ENCODE measurements at regions of chr20 and their contacts with region 1.

Region 1: GRCh38 chr20:33666293-33667244 is at the start of gene ACTL10:
- DNase-seq: peak; percentile 98
- ATAC-seq: peak; percentile 82
- H3K4me3 Mint-ChIP-seq: peak within 1 kb of the TSS; percentile 80
- H3K27ac Mint-ChIP-seq: peak within 1 kb of the TSS; percentile 91
- H3K4me1 Mint-ChIP-seq: peaks cover 28% of the 10 kb centered on the region
- H3K27me3 Mint-ChIP-seq: peaks cover 16% of the 10 kb centered on the region
- CTCF ChIP-seq: no peak
- total RNA-seq, gene ACTL10: 1.3 to 1.9 TPM (median 1.5 TPM) in 3 replicates

Region 2: GRCh38 chr20:33401184-33401920 is 265.2 kb before region 1 on chr20 and contains the start of gene CDK5RAP1:
- CTCF ChIA-PET with region 1: interaction called, 18 read pairs
- POLR2A ChIA-PET with region 1: interaction called, 5 read pairs
- DNase-seq: peak; percentile 83
- ATAC-seq: peak; percentile 87
- H3K4me3 Mint-ChIP-seq: peak within 1 kb of the TSS; percentile 93
- H3K27ac Mint-ChIP-seq: peak within 1 kb of the TSS; percentile 93
- H3K4me1 Mint-ChIP-seq: peaks cover 11% of the 10 kb centered on the region
- H3K27me3 Mint-ChIP-seq: no peaks in the 10 kb centered on the region
- CTCF ChIP-seq: no peak
- total RNA-seq, gene CDK5RAP1: 47.6 to 56.3 TPM (median 52.8 TPM) in 3 replicates

Region 3: DNA sequence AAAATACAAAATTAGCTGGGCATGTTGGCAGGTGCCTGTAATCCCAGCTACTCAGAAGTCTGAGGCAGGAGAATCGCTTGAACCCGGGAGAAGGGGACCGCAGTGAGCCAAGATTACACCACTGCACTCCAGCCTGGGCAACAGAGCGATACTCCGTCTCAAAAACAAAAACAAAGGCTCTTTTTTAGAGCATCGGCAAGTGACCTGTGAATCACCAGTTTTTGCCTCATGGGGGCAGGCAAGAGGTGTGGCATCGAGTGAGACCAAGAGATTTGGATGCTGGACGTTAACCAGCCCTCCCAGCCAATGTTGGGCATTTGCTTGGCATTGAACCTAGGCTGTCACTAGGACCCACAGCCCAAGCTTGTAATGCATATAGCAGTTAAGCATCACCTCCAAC is 250.6 kb before region 1 on chr20:
- CTCF ChIA-PET with region 1: no interaction called
- POLR2A ChIA-PET with region 1: no interaction called
- DNase-seq: peak; percentile 52
- ATAC-seq: peak; percentile 81
- H3K4me3 Mint-ChIP-seq: no peak overlapping the region
- H3K27ac Mint-ChIP-seq: no peak overlapping the region
- H3K4me1 Mint-ChIP-seq: 0 out of 2 replicates have a peak, but pooled peaks cover 2% of the 10 kb centered on the region
- H3K27me3 Mint-ChIP-seq: no peaks in the 10 kb centered on the region
- CTCF ChIP-seq: peak; percentile 42; the same call in 1 of the 2 replicates

Region 4: GRCh38 chr20:33460711-33461110 is 205.9 kb before region 1 on chr20:
- CTCF ChIA-PET with region 1: interaction called, 25 read pairs
- POLR2A ChIA-PET with region 1: interaction called, 3 read pairs
- DNase-seq: no peak
- ATAC-seq: peak; percentile 38
- H3K4me3 Mint-ChIP-seq: no peak overlapping the region
- H3K27ac Mint-ChIP-seq: no peak overlapping the region
- H3K4me1 Mint-ChIP-seq: peaks cover 15% of the 10 kb centered on the region
- H3K27me3 Mint-ChIP-seq: peaks cover 38% of the 10 kb centered on the region
- CTCF ChIP-seq: no peak

Region 5: GRCh38 chr20:33531047-33531877 is 135.3 kb before region 1 on chr20:
- CTCF ChIA-PET with region 1: no interaction called
- POLR2A ChIA-PET with region 1: no interaction called
- DNase-seq: no peak
- ATAC-seq: no peak
- H3K4me3 Mint-ChIP-seq: no peak overlapping the region
- H3K27ac Mint-ChIP-seq: peak overlapping the region; percentile 31
- H3K4me1 Mint-ChIP-seq: peaks cover 3% of the 10 kb centered on the region; the same call in 1 of the 2 replicates
- H3K27me3 Mint-ChIP-seq: no peaks in the 10 kb centered on the region
- CTCF ChIP-seq: no peak

Region 6: GRCh38 chr20:33653218-33653899 is 13.2 kb before region 1 on chr20:
- CTCF ChIA-PET with region 1: interaction called, 134 read pairs
- POLR2A ChIA-PET with region 1: interaction called, 24 read pairs
- DNase-seq: peak; percentile 82
- ATAC-seq: peak; percentile 85
- H3K4me3 Mint-ChIP-seq: no peak overlapping the region
- H3K27ac Mint-ChIP-seq: peak overlapping the region; percentile 48; the same call in 1 of the 2 replicates
- H3K4me1 Mint-ChIP-seq: peaks cover 31% of the 10 kb centered on the region
- H3K27me3 Mint-ChIP-seq: no peaks in the 10 kb centered on the region
- CTCF ChIP-seq: peak; percentile 65

Region 7: DNA sequence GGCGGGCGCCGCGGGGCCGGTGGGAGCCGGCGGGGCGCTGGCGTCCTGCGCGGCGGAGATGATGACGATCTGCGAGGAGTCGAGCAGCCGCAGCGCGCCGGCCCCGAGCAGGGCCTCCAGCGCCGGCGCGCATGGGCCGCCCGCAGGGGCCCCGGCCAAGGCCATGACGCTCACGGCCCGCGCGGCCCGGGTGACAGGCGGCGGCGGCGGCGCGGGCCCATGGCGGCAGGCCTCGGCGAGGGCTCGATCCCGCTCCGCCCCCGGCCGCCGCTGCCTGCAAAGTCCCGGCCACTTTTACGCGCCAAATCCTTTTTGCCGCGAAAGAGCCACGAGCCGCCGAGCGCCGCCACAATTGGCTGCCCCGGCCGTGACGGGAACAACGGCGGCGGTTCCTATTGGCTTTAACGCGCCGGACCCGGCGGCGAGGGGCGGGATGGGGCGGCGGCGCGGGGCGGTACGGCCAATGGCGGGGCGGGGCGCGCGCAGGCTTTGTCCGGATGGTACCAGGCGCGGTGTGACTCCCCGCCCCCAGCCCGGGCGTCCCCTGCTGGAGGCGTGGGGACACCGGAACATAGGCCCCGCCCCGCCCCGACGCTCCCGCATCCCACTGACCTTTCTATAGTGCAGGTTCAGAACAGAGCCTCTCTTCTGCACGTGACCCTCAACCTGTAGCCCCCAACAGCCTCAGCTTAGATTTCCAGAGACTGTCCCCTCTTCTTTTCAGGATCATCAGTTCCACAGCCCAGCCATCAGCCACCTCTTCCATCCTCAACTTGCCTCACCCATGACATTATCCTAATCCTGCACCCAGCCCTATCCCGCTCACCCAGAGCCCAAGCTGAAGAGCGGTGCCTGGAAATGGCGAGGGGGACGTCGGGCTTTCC is 19.8 kb after region 1 on chr20 and contains the start of gene E2F1:
- CTCF ChIA-PET with region 1: interaction called, 32 read pairs
- POLR2A ChIA-PET with region 1: interaction called, 12 read pairs
- DNase-seq: peak; percentile 98
- ATAC-seq: peak; percentile 91
- H3K4me3 Mint-ChIP-seq: peak within 1 kb of the TSS; percentile 81
- H3K27ac Mint-ChIP-seq: peak within 1 kb of the TSS; percentile 85
- H3K4me1 Mint-ChIP-seq: peaks cover 25% of the 10 kb centered on the region
- H3K27me3 Mint-ChIP-seq: peaks cover 30% of the 10 kb centered on the region
- CTCF ChIP-seq: no peak
- total RNA-seq, gene E2F1: 34.2 to 44.2 TPM (median 34.5 TPM) in 3 replicates

Region 8: DNA sequence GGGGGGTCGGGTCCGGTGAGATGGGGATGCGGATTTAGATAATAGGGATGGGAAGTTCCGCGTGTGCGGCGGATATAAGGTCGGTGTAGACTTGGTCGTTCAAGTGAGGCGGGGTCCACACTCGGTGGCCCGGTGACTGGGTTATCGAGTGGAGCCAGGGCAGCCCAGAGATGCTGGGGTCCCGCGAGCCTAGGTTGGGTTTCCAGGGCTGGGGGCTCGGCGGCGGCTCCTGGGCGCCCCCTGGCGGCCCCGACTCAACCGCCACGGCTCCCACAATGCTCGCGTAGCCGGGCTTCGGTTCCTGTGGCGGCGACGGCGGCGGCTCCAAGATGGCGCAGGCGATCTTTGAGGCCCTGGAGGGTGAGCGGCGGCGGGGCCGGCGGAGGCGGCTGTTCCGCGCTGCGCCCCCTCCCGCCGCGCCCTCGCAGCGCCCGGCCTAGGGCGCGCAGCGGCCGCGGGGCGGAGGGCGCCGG is 65.2 kb after region 1 on chr20 and contains the start of gene ZNF341:
- CTCF ChIA-PET with region 1: interaction called, 18 read pairs
- POLR2A ChIA-PET with region 1: interaction called, 5 read pairs
- DNase-seq: peak; percentile 90
- ATAC-seq: peak; percentile 78
- H3K4me3 Mint-ChIP-seq: peak within 1 kb of the TSS; percentile 78
- H3K27ac Mint-ChIP-seq: peak within 1 kb of the TSS; percentile 79
- H3K4me1 Mint-ChIP-seq: peaks cover 19% of the 10 kb centered on the region
- H3K27me3 Mint-ChIP-seq: peaks cover 10% of the 10 kb centered on the region
- CTCF ChIP-seq: peak; percentile 85
- total RNA-seq, gene ZNF341: 7.8 to 9.6 TPM (median 8.0 TPM) in 3 replicates